GM23248 (cell line): ENCODE measurements at regions of chr4 and their contacts with region 1.

Region 1: DNA sequence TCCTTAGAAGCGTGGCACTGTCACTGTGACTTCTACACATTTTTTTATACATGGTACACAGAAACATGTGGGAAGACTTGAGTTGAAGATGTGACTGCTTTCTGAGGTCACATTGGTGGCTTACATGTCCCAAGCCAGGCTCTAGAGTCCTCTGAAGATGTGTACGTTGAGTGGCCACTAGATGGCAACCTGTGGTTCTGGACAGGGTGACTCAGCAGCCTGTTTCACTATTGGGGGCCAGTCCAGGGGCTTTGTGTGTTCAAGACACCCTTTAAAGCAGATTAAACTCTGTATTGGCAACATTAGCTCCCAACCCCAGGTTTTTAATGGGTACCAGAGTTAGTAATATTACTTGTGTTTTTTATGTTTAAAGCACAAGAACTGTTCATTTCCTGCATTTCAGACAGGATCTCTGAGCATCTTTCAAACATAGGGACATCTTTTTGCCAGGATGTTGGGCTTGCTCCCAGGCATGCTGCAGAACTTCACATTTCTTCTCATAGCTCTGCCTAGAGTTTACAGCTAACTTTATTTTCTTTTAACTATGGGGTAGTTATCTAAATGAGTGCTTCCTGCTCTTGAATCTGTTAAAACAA is 53.0 kb downstream of the DCUN1D4 start:
- DNase-seq: peak; percentile 83
- H3K4me3 ChIP-seq: no peak overlapping the region
- H3K27ac ChIP-seq: no peak overlapping the region
- H3K4me1 ChIP-seq: peaks cover 12% of the 10 kb centered on the region
- H3K27me3 ChIP-seq: no peaks in the 10 kb centered on the region

Region 2: GRCh38 chr4:52028969-52029368 is 133.1 kb after region 1 on chr4:
- in situ Hi-C with region 1: loop called (anchors 10 kb)
- DNase-seq: peak; percentile 78
- H3K4me3 ChIP-seq: no peak overlapping the region
- H3K27ac ChIP-seq: 0 out of 2 replicates have a peak overlapping the region, but pooled peaks have one; percentile 14
- H3K4me1 ChIP-seq: peaks cover 13% of the 10 kb centered on the region
- H3K27me3 ChIP-seq: no peaks in the 10 kb centered on the region

Region 3: GRCh38 chr4:52164116-52164515 is 268.2 kb after region 1 on chr4:
- in situ Hi-C with region 1: no loop called
- DNase-seq: no peak
- H3K4me3 ChIP-seq: no peak overlapping the region
- H3K27ac ChIP-seq: no peak overlapping the region
- H3K4me1 ChIP-seq: no peaks in the 10 kb centered on the region
- H3K27me3 ChIP-seq: no peaks in the 10 kb centered on the region

Region 4: GRCh38 chr4:52187603-52188002 is 291.7 kb after region 1 on chr4:
- in situ Hi-C with region 1: no loop called
- DNase-seq: no peak
- H3K4me3 ChIP-seq: no peak overlapping the region
- H3K27ac ChIP-seq: no peak overlapping the region
- H3K4me1 ChIP-seq: no peaks in the 10 kb centered on the region
- H3K27me3 ChIP-seq: no peaks in the 10 kb centered on the region